PC-3 (cell line): ENCODE measurements at regions of chr3 and their contacts with region 1.

Region 1: GRCh38 chr3:138824114-138824506 is 10.6 kb downstream of the PIK3CB start:
- DNase-seq: peak; percentile 7
- ATAC-seq: peak; percentile 37; the same call in 1 of the 2 replicates
- H3K4me3 ChIP-seq: no peak overlapping the region
- H3K27ac ChIP-seq: no peak overlapping the region
- H3K4me1 ChIP-seq: peaks cover 13% of the 10 kb centered on the region
- H3K27me3 ChIP-seq: no peaks in the 10 kb centered on the region
- CTCF ChIP-seq: no peak

Region 2: DNA sequence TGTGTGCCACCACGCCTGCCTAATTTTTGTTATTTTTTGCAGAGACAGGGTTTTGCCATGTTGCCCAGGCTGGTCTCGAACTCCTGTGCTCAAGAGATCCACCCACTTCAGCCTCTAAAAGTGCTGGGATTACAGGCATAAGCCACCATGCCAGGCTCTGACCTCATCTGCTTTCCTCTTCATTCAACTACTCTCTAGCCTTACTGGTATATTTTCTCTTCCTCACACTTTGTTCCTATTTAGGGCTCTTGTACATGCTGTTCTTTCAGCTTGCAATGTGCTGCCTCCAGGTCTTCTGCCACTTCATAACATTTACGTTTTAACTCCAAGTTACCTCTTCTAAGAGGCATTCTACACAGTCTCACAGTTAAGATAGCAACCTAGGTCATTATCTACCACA is 24.3 kb before region 1 on chr3:
- CTCF ChIA-PET with region 1: no interaction called
- POLR2A ChIA-PET with region 1: interaction called, 13 read pairs
- intact Hi-C with region 1: no loop called
- DNase-seq: no peak
- ATAC-seq: no peak
- H3K4me3 ChIP-seq: no peak overlapping the region
- H3K27ac ChIP-seq: no peak overlapping the region
- H3K4me1 ChIP-seq: no peaks in the 10 kb centered on the region
- H3K27me3 ChIP-seq: no peaks in the 10 kb centered on the region
- CTCF ChIP-seq: no peak

Region 3: GRCh38 chr3:138898301-138898700 is 74.2 kb after region 1 on chr3:
- CTCF ChIA-PET with region 1: no interaction called
- POLR2A ChIA-PET with region 1: no interaction called
- intact Hi-C with region 1: no loop called
- DNase-seq: no peak
- ATAC-seq: peak; percentile 91
- H3K4me3 ChIP-seq: no peak overlapping the region
- H3K27ac ChIP-seq: no peak overlapping the region
- H3K4me1 ChIP-seq: no peaks in the 10 kb centered on the region
- H3K27me3 ChIP-seq: no peaks in the 10 kb centered on the region
- CTCF ChIP-seq: no peak

Region 4: GRCh38 chr3:138950006-138950644 is 126.0 kb after region 1 on chr3:
- CTCF ChIA-PET with region 1: no interaction called
- POLR2A ChIA-PET with region 1: no interaction called
- intact Hi-C with region 1: no loop called
- DNase-seq: no peak
- ATAC-seq: no peak
- H3K4me3 ChIP-seq: no peak overlapping the region
- H3K27ac ChIP-seq: no peak overlapping the region
- H3K4me1 ChIP-seq: no peaks in the 10 kb centered on the region
- H3K27me3 ChIP-seq: no peaks in the 10 kb centered on the region
- CTCF ChIP-seq: no peak

Region 5: GRCh38 chr3:138985932-138986331 is 161.8 kb after region 1 on chr3:
- CTCF ChIA-PET with region 1: no interaction called
- POLR2A ChIA-PET with region 1: no interaction called
- intact Hi-C with region 1: no loop called
- DNase-seq: no peak
- ATAC-seq: no peak
- H3K4me3 ChIP-seq: no peak overlapping the region
- H3K27ac ChIP-seq: no peak overlapping the region
- H3K4me1 ChIP-seq: no peaks in the 10 kb centered on the region
- H3K27me3 ChIP-seq: no peaks in the 10 kb centered on the region
- CTCF ChIP-seq: no peak

Region 6: DNA sequence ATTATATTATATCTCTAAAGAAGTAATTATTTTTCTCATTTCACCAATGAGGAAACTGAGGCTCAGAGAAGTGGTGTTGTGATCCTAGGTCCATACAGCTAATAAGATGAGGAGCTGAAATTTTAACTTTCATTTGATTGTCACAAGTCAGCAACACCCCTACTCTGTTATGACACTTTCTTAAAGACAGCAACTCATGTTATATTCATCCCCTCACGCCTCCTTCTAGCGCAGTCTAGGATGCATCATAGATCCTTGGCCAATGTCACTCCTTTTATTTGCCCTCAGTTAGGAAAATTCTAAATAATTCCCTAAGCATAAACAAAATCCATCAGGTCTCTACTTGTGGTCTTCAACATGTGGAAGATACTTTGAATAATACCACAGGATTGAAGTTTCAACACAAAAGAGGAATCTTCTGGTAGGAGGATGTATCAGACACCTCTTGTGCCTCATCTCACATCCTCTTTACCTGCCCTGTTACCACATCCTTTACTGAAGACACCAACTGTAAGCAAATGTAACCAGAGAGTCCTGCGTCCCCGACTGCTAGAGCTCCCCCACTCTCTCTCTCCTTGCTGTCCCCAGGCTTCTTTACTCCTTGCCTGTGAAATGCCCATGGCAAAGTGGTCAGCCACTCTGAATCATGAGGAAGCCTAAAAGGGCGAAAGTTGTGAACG is 1907.5 kb after region 1 on chr3:
- CTCF ChIA-PET with region 1: no interaction called
- POLR2A ChIA-PET with region 1: no interaction called
- intact Hi-C with region 1: no loop called
- DNase-seq: no peak
- ATAC-seq: no peak
- H3K4me3 ChIP-seq: no peak overlapping the region
- H3K27ac ChIP-seq: no peak overlapping the region
- H3K4me1 ChIP-seq: no peaks in the 10 kb centered on the region
- H3K27me3 ChIP-seq: peaks cover 13% of the 10 kb centered on the region
- CTCF ChIP-seq: no peak